ENCODE measurements at regions of chr5 and their contacts with region 1.

Region 1: GRCh38 chr5:95961617-95962474 is at the start of gene ELL2:
- H3K4me3 Mint-ChIP-seq: peak within 1 kb of the TSS; percentile 97
- H3K27ac Mint-ChIP-seq: peak within 1 kb of the TSS; percentile 91
- H3K4me1 Mint-ChIP-seq: peaks cover 40% of the 10 kb centered on the region
- H3K27me3 Mint-ChIP-seq: peaks cover 24% of the 10 kb centered on the region

Region 2: DNA sequence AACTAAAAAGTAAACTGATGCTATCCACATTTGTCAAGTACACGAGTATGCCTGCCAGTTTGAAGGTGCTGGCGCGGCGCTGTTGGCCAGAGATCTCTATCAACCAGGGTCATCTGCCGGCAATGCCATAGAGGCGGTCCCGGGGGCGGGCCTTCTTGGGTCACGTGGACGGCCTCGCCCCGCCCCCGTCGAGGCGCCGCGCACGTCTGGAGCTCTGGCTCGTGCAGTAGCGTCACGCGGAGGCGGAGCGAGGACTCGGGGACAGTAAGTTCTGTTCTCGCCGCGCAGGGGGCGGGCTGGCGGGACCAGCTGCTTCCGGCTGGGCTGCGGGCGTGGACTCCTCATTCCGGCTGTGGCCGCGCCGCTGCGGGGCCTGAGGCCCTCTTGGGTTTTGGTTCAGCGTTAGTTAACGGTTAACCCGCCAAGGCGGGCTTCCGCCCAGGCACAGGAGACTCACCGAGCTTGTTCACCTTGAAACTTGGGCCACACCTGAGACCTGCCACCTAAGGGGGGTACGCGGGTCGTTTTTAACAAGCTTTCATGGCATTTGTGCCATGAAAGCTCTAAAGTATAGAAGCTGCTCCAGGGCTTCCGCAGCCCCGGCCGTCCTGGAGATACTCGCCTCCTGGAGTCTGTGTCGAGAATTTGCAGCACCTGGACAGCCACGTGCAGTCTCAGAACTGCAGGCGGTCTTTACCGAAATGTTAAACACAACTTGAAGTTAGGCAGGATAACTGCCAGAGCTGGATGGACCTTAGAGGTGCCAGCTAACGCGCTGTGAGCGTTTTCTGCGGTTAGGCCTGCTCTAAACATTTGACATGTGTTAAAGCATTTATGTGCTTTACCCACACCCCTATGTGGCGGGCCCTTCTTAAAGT is 315.1 kb before region 1 on chr5 and contains the start of gene RFESD:
- intact Hi-C with region 1: loop called (anchors 10 kb)
- H3K4me3 Mint-ChIP-seq: peak within 1 kb of the TSS; percentile 77
- H3K27ac Mint-ChIP-seq: peak within 1 kb of the TSS; percentile 92
- H3K4me1 Mint-ChIP-seq: peaks cover 6% of the 10 kb centered on the region
- H3K27me3 Mint-ChIP-seq: no peaks in the 10 kb centered on the region

Region 3: GRCh38 chr5:95858661-95859326 is 103.1 kb before region 1 on chr5:
- intact Hi-C with region 1: loop called (anchors 2 kb)
- H3K4me3 Mint-ChIP-seq: peak overlapping the region; percentile 58
- H3K27ac Mint-ChIP-seq: no peak overlapping the region
- H3K4me1 Mint-ChIP-seq: peaks cover 54% of the 10 kb centered on the region
- H3K27me3 Mint-ChIP-seq: peaks cover 6% of the 10 kb centered on the region

Region 4: DNA sequence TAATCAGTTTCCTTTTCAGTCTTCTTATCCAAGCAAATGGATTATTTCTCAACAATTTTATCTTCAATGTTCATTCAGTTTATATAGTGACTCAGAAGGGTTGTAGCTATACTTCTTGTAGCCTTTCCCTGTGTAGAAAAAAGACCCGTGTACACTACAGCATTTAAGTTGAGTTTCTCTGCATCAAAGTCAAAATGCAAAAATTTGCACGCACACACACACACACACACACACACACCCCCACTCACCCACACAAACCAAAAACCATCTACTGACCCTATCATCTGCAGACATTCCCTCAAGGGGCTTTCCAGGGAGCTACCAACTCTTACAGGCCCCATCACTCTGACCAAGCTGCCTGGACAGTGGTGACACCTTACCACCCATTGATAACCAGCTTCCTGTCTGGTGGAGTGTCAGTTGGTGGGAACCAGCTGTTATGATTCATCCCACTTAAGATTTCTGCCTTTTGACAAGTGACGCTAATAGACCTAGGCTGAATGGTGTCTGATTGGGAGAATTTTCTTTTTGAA is 12.0 kb after region 1 on chr5:
- intact Hi-C with region 1: no loop called
- H3K4me3 Mint-ChIP-seq: no peak overlapping the region
- H3K27ac Mint-ChIP-seq: no peak overlapping the region
- H3K4me1 Mint-ChIP-seq: peaks cover 5% of the 10 kb centered on the region
- H3K27me3 Mint-ChIP-seq: no peaks in the 10 kb centered on the region

Region 5: DNA sequence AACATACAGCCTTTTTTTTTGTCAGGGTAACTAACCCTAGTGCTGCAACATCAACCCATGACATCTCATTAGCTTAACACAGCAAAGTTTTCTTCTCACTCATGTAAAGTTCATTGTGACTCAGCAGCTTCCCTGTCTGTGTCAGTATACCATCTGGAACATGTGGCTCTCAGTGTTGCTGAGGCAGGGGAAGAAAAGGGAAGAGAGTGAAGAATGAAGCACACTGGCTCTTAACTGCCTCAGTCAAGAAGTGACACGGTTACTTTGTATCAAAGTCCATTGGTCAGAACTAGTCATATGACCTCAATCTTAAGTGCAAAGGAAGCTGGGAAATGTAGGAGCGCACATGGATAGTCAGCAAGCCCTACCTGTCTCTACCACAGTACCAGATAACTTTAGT is 184.8 kb after region 1 on chr5:
- intact Hi-C with region 1: loop called (anchors 5 kb)
- H3K4me3 Mint-ChIP-seq: no peak overlapping the region
- H3K27ac Mint-ChIP-seq: peak overlapping the region; percentile 60
- H3K4me1 Mint-ChIP-seq: peaks cover 25% of the 10 kb centered on the region
- H3K27me3 Mint-ChIP-seq: no peaks in the 10 kb centered on the region

Region 6: GRCh38 chr5:96336351-96336985 is 374.6 kb after region 1 on chr5:
- intact Hi-C with region 1: loop called (anchors 1 kb)
- H3K4me3 Mint-ChIP-seq: no peak overlapping the region
- H3K27ac Mint-ChIP-seq: no peak overlapping the region
- H3K4me1 Mint-ChIP-seq: peaks cover 18% of the 10 kb centered on the region
- H3K27me3 Mint-ChIP-seq: no peaks in the 10 kb centered on the region

Measured in dendritic cell treated with granulocyte-macrophage colony-stimulating factor and Interleukin-4, amounts not matched to agents 40 ng/mL and 50 ng/mL, for 4 days (primary cell).